ENCODE measurements at regions of chr1 and their contacts with region 1.

Region 1: GRCh38 chr1:109041621-109042468 is at the start of gene WDR47:
- DNase-seq: peak; percentile 91 to 95 (median 92)
- H3K4me3 ChIP-seq: peak within 1 kb of the TSS; percentile 93
- H3K27ac ChIP-seq: peak within 1 kb of the TSS in 1 of 2 donors; percentile 48
- H3K4me1 ChIP-seq: no peaks in the 10 kb centered on the region
- H3K27me3 ChIP-seq: no peaks in the 10 kb centered on the region
- CTCF ChIP-seq: no peak
- EP300 ChIP-seq: no peak
- POLR2A ChIP-seq: peak; percentile 78
- total RNA-seq, gene WDR47: 11.6 to 21.3 (median 13.7) TPM

Region 2: GRCh38 chr1:109075531-109076490 is 34.0 kb after region 1 on chr1 and contains the start of gene TAF13:
- intact Hi-C with region 1: loop called in 1 of 4 experiments (anchors 5 kb)
- DNase-seq: peak; percentile 93 to 95 (median 93)
- H3K4me3 ChIP-seq: peak within 1 kb of the TSS; percentile 57
- H3K27ac ChIP-seq: peak within 1 kb of the TSS; percentile 15 to 89
- H3K4me1 ChIP-seq: peaks cover 1% of the 10 kb centered on the region
- H3K27me3 ChIP-seq: no peaks in the 10 kb centered on the region
- CTCF ChIP-seq: peak in 2 of 3 donors; percentile 60 to 64
- EP300 ChIP-seq: no peak
- POLR2A ChIP-seq: peak; percentile 92
- total RNA-seq, gene TAF13: 6.6 to 23.4 (median 19.5) TPM

Region 3: GRCh38 chr1:109099938-109100773 is 58.3 kb after region 1 on chr1:
- intact Hi-C with region 1: loop called in 1 of 4 experiments (anchors 5 kb)
- DNase-seq: peak; percentile 96 to 98 (median 97)
- H3K4me3 ChIP-seq: peak overlapping the region; percentile 79
- H3K27ac ChIP-seq: peak overlapping the region; percentile 93
- H3K4me1 ChIP-seq: no peaks in the 10 kb centered on the region
- H3K27me3 ChIP-seq: no peaks in the 10 kb centered on the region
- CTCF ChIP-seq: peak; percentile 85 to 94 (median 89)
- EP300 ChIP-seq: no peak
- POLR2A ChIP-seq: peak; percentile 99

Region 4: GRCh38 chr1:109239580-109240095 is 197.8 kb after region 1 on chr1:
- intact Hi-C with region 1: no loop called
- DNase-seq: peak in 1 of 5 donors; percentile 25
- H3K4me3 ChIP-seq: no peak overlapping the region
- H3K27ac ChIP-seq: no peak overlapping the region
- H3K4me1 ChIP-seq: peaks cover 14% of the 10 kb centered on the region
- H3K27me3 ChIP-seq: no peaks in the 10 kb centered on the region
- CTCF ChIP-seq: no peak
- EP300 ChIP-seq: no peak
- POLR2A ChIP-seq: no peak

Region 5: DNA sequence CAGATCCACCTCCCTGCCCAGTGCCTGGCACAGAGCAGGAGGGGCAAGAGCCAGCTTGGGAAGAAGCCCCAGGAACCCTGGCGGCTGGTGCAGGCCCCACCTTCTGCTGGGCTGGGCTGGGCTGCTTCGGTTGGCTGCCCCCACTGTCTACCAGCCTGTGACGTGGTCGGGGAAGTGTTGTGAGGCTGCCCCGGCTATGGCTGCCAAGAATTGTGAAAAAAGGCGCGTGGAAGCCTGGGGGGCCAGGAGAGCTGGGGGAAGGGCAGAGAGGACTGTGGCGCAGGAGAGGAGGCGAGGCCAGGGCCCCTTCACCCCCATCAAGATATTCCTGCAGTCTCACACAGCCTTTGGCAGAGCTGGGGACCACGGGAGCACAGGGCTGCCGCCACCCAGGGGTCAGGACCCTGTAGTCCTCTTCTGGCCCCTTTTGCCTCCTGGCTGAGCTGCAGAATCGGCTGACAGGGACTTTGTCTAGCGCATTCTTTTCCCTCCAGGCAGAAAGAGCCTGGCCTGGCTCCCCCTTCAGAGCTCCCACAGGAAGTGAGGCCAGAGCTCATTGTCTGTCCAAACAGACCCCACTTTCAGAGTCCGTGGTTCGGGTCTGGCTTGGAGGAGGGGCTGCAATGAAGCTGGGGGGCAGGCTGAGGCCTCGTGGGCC is 211.8 kb after region 1 on chr1:
- intact Hi-C with region 1: no loop called
- DNase-seq: peak in 3 of 5 donors; percentile 17 to 36 (median 22)
- H3K4me3 ChIP-seq: no peak overlapping the region
- H3K27ac ChIP-seq: no peak overlapping the region
- H3K4me1 ChIP-seq: peaks cover 4% of the 10 kb centered on the region
- H3K27me3 ChIP-seq: no peaks in the 10 kb centered on the region
- CTCF ChIP-seq: no peak
- EP300 ChIP-seq: no peak
- POLR2A ChIP-seq: no peak

Measured in ovary (tissue), 10 donors.